ENCODE measurements at regions of chr2 and their contacts with region 1.

Region 1: DNA sequence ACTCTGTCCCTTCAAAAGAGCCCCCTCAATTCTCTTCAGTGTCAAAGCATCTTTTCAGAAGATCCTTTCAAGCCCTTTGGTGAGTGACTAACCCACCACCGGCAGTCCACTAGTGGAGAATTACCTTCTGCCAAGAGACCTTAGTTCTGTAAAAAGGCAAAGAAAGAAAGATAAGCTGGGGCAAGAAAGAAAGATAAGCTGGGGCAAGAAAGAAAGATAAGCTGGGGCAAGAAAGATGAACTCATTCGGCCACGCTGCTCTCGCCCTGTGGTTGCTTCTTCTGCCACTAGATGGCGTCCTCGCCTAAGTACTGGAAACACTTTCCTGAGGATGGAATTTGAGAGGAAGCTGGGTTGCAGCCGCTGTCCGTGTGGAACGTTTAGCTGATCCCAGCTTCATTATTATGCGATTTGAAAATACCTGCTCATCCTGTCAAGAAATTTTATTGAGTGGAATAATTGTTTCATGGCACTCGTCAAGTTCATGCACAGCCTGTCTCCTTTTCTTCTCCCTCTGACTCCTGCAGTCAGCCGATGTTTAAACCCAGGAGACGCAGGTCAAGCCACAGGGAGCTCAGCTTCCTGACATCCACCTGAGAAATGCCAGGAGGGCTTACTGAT is 17.3 kb upstream of the ANXA4 start:
- DNase-seq: peak; percentile 50 to 97
- H3K4me3 ChIP-seq: peak overlapping the region in 2 of 4 experiments; percentile 4 to 49; a peak in 3 of 8 replicates
- H3K27ac ChIP-seq: no peak overlapping the region
- H3K4me1 ChIP-seq: peaks cover 0 to 2% (median 0%) of the 10 kb centered on the region in 4 experiments; a peak in 1 of 7 replicates
- H3K27me3 ChIP-seq: no peaks in the 10 kb centered on the region
- CTCF ChIP-seq: peak; percentile 90 to 95 (median 91)
- EP300 ChIP-seq: no peak
- POLR2A ChIP-seq: no peak
- RAD21 ChIP-seq: peak; percentile 95 to 98

Region 2: DNA sequence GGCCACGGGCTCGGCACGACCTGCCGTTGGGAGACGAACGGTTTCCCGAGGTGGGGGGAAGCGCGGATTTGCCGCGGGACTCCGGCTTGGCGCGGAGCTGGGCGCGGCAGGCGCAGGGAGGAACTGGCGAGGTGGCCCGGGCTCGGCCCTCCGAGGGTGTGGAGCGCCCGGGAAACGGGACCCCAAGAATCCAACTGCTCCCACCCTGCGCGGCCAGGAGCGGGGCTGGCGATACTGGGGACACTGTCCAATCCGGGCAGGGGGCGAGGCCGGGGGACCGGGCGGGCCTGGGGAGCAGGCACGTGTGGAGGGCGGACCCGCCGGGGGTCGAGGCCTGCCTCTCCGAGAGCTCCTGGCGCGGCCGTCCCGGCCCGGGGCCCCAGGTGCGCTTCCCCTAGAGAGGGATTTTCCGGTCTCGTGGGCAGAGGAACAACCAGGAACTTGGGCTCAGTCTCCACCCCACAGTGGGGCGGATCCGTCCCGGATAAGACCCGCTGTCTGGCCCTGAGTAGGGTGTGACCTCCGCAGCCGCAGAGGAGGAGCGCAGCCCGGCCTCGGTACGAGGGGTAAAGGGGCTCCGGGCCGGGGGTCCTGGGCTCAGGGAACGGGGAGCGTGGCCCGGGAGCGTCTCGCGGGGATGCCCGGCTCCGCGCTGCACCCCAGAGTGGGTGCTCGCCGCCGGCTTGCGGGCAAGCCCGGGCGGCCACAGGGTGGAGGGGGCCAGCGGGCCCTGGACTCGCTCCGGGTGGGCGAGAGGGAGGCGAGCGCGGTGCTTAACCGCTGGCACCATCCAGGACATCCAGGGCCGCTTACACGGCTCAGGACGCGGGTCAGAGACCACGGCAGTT is 17.2 kb after region 1 on chr2 and contains the start of gene ANXA4:
- CTCF ChIA-PET with region 1: interaction called, 51 read pairs
- POLR2A ChIA-PET with region 1: interaction called, 7 read pairs
- DNase-seq: peak; percentile 36 to 86
- H3K4me3 ChIP-seq: peak within 1 kb of the TSS; percentile 61 to 73 (median 65)
- H3K27ac ChIP-seq: no peak within 1 kb of the TSS
- H3K4me1 ChIP-seq: peaks cover 0 to 2% (median 1%) of the 10 kb centered on the region in 4 experiments; a peak in 3 of 7 replicates
- H3K27me3 ChIP-seq: peaks cover 0 to 15% (median 11%) of the 10 kb centered on the region in 4 experiments; a peak in 6 of 7 replicates
- CTCF ChIP-seq: no peak
- EP300 ChIP-seq: no peak
- POLR2A ChIP-seq: peak in 1 of 2 experiments; percentile 54; a peak in 2 of 3 replicates
- RAD21 ChIP-seq: no peak
- total RNA-seq, gene ANXA4: 16.9 and 17.6 TPM in 2 replicates

Region 3: DNA sequence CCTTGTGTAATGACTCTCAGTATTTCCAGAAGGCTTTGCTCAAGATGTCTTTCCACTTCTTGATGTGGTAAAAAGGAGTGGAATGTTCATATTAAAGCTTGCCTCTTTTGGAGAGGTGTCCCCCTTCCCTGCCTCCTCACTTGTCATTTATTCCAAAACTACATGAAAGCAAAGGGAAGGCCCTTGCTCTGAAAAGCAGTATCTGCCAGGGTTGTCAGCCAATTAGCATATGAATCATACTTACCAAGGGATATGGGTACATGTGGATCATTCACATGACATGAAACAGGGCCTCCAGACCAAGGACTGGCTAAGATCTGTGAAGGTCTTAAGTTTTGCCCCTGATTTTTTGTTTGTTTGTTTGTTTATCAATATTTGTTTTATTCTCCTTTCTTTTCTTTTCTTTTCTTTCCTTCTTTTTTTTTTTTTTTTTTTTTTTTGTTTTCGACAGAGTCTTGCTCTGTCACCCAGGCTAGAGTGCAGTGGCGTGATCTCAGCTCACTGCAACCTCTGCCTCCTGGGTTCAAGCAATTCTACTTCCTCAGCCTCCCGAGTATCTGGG is 48.6 kb after region 1 on chr2:
- CTCF ChIA-PET with region 1: interaction called, 16 read pairs
- POLR2A ChIA-PET with region 1: interaction called, 3 read pairs
- DNase-seq: no peak
- H3K4me3 ChIP-seq: no peak overlapping the region
- H3K27ac ChIP-seq: no peak overlapping the region
- H3K4me1 ChIP-seq: peaks cover 0 to 12% (median 9%) of the 10 kb centered on the region in 4 experiments; a peak in 6 of 7 replicates
- H3K27me3 ChIP-seq: no peaks in the 10 kb centered on the region
- CTCF ChIP-seq: no peak
- EP300 ChIP-seq: no peak
- POLR2A ChIP-seq: no peak
- RAD21 ChIP-seq: no peak

Region 4: GRCh38 chr2:69816923-69817542 is 92.4 kb after region 1 on chr2:
- CTCF ChIA-PET with region 1: interaction called, 319 read pairs
- POLR2A ChIA-PET with region 1: interaction called, 7 read pairs
- DNase-seq: peak; percentile 60 to 68
- H3K4me3 ChIP-seq: no peak overlapping the region
- H3K27ac ChIP-seq: no peak overlapping the region
- H3K4me1 ChIP-seq: peaks cover 0 to 9% (median 0%) of the 10 kb centered on the region in 4 experiments; a peak in 3 of 7 replicates
- H3K27me3 ChIP-seq: no peaks in the 10 kb centered on the region
- CTCF ChIP-seq: peak in 2 of 3 experiments; percentile 79 to 82; a peak in 3 of 4 replicates
- EP300 ChIP-seq: no peak
- POLR2A ChIP-seq: no peak
- RAD21 ChIP-seq: peak; percentile 73 to 86

Region 5: DNA sequence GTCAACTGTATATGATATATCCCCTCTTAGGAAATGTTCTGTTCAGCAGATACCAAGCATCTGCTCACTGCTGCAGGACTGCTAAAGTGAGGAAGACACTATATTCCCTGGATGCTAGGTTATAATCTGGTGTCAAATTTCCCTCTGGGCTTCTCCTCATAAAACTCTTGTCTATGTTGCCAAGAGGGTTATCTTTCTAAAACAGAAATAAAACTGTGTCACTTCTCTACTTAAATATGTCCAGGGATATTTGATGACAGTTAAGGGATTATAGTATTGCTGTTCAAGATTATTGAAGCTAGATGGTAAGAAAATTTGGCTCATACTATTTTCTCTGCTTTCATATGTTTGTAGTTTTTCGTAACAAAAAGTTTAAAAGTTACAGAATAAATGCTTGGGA is 138.6 kb after region 1 on chr2:
- CTCF ChIA-PET with region 1: interaction called, 10 read pairs
- POLR2A ChIA-PET with region 1: interaction called, 7 read pairs
- DNase-seq: no peak
- H3K4me3 ChIP-seq: no peak overlapping the region
- H3K27ac ChIP-seq: no peak overlapping the region
- H3K4me1 ChIP-seq: no peaks in the 10 kb centered on the region
- H3K27me3 ChIP-seq: no peaks in the 10 kb centered on the region
- CTCF ChIP-seq: no peak
- EP300 ChIP-seq: no peak
- POLR2A ChIP-seq: no peak
- RAD21 ChIP-seq: no peak